GM10248 (cell line): ENCODE measurements at regions of chr2 and their contacts with region 1.

Region 1: DNA sequence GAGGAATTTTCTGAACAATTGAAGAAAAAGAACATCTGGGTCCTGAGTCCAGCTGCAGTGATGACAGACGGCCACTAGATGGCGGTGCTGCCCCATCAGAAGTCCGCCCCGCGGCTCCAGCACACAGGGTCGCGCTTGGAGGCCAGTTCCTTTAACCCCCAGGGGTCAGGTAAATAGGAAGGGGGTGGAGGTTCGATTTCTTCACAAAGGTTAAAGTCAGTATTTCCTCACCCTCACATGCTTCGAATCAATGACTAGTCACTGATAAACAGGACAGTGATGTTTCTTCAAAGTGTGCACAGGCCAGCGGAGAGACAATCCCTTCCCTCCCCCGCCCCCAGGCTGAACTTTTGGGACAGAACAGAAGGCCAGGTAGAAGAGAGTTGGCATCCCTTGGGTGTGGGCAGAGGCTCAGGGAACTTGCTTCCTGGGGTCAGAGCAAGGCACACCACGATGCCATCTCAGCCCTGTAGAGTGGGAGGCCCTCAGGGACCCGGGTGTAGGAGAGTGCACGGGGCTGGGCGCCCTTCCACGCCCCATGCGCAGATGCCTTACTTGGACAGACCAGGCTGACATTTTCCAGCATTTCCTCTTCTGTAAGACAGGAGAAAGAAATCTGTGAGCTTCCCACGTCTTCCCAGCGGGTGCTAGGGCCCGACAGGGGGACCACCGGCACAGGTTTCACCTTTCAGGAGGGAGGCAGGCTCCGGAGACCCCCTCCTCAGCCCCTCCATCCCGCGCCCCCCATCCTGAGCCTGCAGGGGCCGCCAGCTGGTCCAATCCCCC is 722 bp downstream of the APOB start:
- DNase-seq: peak; percentile 76
- CTCF ChIP-seq: peak; percentile 94

Region 2: DNA sequence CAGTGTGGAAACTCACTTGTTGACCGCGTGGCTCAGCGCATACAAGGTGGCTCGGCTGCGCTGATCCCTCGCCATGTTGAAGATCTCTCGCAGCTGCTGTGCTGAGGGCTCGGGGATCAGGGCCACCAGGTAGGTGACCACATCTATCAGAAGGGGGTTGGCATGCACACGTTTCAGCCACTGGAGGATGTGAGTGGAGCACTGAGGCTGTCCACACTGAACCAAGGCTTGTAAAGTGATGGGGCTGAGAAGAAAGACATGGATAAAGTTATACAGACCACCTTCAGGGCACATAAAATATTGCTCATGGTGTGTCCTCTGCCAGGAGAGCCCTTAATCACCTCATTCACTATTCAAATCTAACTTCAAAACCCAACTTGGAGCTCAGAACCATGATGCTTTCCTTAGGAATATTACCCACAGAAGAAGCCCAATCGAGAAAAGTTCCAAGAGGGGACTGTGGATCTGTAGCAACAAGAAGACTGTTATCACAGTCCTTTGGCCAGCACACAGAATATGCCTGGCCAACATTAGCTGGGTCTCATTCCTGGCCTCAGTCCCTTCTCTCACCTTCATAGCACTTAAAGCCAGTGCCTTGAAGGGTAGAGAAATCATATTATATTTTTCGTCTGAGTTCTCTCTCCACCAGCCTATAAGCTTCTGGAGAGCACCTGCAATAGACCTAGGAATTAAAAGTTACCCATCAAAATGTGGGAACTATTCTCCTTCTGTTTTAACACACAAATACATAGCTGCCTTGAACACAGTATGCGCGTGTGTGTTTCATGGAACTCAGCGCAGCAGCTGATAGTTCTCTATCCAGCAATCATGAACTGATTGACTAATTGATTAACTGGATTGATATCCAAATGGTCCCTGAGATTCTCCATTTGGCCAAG is 10.6 kb before region 1 on chr2:
- CTCF ChIA-PET with region 1: interaction called, 24 read pairs
- POLR2A ChIA-PET with region 1: no interaction called
- DNase-seq: no peak
- CTCF ChIP-seq: no peak

Region 3: GRCh38 chr2:21055879-21056790 is 13.0 kb after region 1 on chr2:
- CTCF ChIA-PET with region 1: interaction called, 17 read pairs
- POLR2A ChIA-PET with region 1: no interaction called
- DNase-seq: no peak
- CTCF ChIP-seq: no peak

Region 4: GRCh38 chr2:21118302-21118920 is 75.3 kb after region 1 on chr2:
- CTCF ChIA-PET with region 1: interaction called, 18 read pairs
- POLR2A ChIA-PET with region 1: no interaction called
- DNase-seq: peak; percentile 28
- CTCF ChIP-seq: peak; percentile 41

Region 5: DNA sequence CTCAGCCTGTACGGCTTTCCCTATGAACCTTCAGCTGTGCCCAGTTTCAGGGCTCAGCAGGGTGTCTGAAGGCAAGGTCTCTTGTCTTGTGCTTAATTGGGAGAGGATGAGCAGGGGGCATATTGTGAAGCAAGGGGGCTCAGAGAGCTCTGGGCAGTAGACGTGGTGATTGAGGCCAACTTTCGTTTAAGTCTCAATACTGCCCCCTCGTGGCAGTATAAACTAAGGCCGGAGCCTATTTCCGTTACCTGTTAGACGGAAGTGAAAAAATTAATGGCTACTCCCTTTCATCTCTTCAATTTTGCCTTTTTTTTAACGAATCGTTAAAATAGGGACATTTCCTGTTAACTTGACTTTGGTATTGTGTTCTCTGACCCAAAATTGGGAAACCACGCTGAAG is 274.0 kb after region 1 on chr2:
- CTCF ChIA-PET with region 1: interaction called, 57 read pairs
- POLR2A ChIA-PET with region 1: no interaction called
- DNase-seq: peak; percentile 45
- CTCF ChIP-seq: peak; percentile 59